Mammary epithelial cell (primary cell): ENCODE measurements at regions of chr11 and their contacts with region 1.

Region 1: GRCh38 chr11:120063686-120064340 is 74.1 kb downstream of the TRIM29 start:
- DNase-seq: no peak
- H3K4me3 ChIP-seq: no peak overlapping the region
- H3K27ac ChIP-seq: no peak overlapping the region
- H3K4me1 ChIP-seq: peaks cover 9% of the 10 kb centered on the region
- H3K27me3 ChIP-seq: no peaks in the 10 kb centered on the region
- CTCF ChIP-seq: no peak

Region 2: DNA sequence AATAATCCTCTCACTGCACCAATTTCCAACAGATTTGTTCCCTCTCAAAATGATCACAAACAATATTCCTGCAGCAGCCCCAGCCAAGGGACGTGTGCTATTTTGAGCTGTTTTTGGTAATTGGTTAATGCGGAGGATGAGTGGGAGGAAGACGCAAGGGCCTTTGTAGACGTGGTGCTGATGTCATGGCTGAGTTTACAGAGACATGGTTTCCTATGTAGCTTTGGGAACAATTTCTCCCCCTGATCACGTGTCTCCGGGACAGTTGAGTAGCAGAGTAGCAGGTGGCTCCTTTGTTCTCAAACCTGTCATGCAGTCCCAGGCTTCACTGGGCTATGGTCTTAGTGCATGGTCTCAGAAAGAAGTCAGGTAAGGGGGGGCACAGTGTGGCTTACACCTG is 151.6 kb before region 1 on chr11:
- CTCF ChIA-PET with region 1: no interaction called
- dilution Hi-C with region 1: no loop called
- in situ Hi-C with region 1: no loop called
- intact Hi-C with region 1: no loop called
- DNase-seq: no peak
- H3K4me3 ChIP-seq: no peak overlapping the region
- H3K27ac ChIP-seq: no peak overlapping the region
- H3K4me1 ChIP-seq: no peaks in the 10 kb centered on the region
- H3K27me3 ChIP-seq: peaks cover 7% of the 10 kb centered on the region
- CTCF ChIP-seq: no peak

Region 3: DNA sequence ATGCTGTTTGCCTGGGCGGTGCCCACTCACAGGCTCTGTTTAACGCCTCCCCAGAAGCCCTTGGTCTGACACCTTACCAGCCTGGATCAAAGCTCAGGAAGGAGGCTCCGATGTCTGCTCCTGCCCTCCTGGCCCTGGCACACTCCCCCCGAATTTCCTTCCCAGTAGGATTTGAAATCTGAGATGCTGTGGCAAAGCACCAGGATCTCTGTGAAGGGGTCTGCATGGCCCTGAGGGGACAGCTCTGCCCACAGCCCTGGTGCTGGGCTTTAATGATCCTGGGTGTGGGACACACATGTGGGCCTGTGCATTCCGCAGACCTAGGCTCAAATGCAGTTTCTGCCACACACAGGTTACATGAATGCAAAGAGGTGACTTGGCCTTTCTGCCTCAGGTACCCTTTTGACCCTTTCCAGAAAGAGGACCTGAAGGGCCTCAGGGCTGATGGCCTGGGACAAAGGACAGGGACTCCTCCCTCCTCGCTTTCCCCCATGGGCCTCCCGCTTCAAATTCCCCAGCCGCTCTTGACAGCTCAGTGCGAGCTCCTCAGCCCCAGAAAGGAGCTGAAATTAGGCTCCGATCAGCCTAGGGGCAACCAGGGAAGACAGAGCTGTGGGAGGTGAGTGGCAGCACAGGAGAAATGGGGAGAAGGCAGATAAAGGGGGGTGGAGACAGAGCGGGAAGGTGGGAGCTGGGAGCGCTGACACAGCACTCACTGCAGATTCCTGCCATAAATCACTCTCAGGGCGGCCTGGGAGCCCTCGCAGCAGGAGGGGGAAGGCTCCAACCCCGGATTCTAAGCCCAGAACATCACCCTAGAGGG is 32.8 kb after region 1 on chr11:
- CTCF ChIA-PET with region 1: no interaction called
- dilution Hi-C with region 1: no loop called
- in situ Hi-C with region 1: no loop called
- intact Hi-C with region 1: loop called (anchors 1 kb)
- DNase-seq: no peak
- H3K4me3 ChIP-seq: no peak overlapping the region
- H3K27ac ChIP-seq: no peak overlapping the region
- H3K4me1 ChIP-seq: no peaks in the 10 kb centered on the region
- H3K27me3 ChIP-seq: peaks cover 7% of the 10 kb centered on the region
- CTCF ChIP-seq: no peak

Region 4: GRCh38 chr11:120224972-120225909 is 161.4 kb after region 1 on chr11:
- CTCF ChIA-PET with region 1: no interaction called
- dilution Hi-C with region 1: no loop called
- in situ Hi-C with region 1: no loop called
- intact Hi-C with region 1: no loop called
- DNase-seq: no peak
- H3K4me3 ChIP-seq: no peak overlapping the region
- H3K27ac ChIP-seq: no peak overlapping the region
- H3K4me1 ChIP-seq: no peaks in the 10 kb centered on the region
- H3K27me3 ChIP-seq: no peaks in the 10 kb centered on the region
- CTCF ChIP-seq: no peak